Activated naive CD4-positive, alpha-beta T cell treated with anti-CD3 and anti-CD28 coated beads, Interleukin-2, amount 10 ng/mL, durations not matched to agents 7 days and 5 days (primary cell): ENCODE measurements at regions of chr6 and their contacts with region 1.

Region 1: DNA sequence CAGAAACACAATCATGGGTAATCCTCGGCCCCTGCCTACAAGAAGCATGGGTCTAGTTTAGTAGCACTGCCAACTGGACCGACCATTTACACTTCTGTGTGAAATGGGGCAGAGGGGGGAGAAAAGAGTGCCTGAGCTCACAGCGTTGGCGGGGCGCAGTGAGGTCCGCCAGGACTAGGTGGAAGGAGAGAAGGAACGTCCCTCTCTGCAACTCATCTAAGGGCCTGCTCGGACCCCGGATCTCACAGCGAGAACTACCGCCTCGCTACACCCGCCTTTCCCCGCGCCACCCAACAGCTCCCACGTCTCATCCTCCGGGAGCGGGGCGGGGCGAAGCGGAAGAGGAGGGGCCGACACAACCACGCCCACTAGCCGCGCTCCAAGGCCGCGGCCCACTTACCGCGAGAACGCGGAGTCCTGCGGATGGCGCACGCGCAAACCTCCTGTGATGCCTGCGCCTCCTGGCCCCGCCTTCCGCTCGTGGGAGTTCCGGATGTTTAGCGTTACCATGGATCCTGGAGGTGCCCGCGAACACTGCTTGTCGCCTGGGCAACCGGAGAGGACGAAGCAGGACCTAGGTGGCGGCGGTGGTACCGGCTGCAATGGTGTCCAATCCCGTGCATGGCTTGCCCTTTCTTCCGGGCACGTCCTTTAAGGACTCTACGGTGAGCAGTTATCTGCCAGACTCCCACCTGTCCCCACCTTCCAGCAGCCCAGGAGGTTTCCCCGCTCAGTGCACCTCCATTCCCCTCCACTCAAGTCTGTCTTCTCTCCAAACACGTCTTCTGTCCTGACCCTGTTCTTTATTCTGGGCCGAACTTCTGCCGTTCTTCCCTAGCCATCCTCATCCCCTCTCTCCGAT is at the start of gene EFHC1:
- DNase-seq: peak; percentile 98
- H3K4me3 Mint-ChIP-seq: no peak within 1 kb of the TSS
- H3K27ac Mint-ChIP-seq: peak within 1 kb of the TSS; percentile 86
- H3K4me1 Mint-ChIP-seq: peaks cover 22% of the 10 kb centered on the region
- H3K27me3 Mint-ChIP-seq: no peaks in the 10 kb centered on the region

Region 2: DNA sequence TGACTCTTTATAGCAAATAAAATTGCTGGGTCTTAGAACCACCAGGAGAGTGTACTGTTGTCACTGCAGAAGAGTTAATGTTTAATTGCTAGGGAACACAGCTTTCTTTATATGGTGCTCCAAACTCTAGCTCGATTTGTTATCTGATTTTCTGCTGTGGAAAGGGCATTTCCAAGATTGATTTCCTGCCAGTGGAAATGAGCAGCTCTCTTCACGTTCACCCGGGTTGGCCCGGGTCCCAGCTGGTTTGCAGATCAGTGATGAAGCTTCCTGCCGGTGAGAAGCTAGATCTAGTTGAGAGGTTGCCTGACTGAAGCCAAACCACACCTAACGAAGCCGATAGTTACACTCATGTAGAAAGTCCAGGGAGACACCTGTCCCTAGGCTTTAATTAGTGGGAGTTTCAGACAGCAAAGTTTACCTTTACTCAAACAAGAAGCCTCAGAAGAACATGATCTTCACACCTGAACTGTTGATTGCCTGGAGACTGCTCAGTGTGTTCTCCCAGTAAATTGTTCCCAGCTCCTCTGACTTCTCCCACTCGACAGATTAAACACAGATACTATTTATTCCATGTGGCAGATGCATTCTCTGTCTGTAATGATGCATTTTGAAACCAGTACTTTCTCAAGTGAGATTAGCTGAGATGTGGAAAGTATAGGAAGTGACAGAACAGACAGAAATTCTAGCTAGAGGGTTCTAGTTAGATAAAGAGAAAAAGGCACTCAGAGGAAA is 30.2 kb before region 1 on chr6:
- CTCF ChIA-PET with region 1: interaction called, 14 read pairs
- DNase-seq: peak; percentile 69
- H3K4me3 Mint-ChIP-seq: peak overlapping the region; percentile 66
- H3K27ac Mint-ChIP-seq: peak overlapping the region; percentile 98
- H3K4me1 Mint-ChIP-seq: peaks cover 80% of the 10 kb centered on the region
- H3K27me3 Mint-ChIP-seq: no peaks in the 10 kb centered on the region

Region 3: DNA sequence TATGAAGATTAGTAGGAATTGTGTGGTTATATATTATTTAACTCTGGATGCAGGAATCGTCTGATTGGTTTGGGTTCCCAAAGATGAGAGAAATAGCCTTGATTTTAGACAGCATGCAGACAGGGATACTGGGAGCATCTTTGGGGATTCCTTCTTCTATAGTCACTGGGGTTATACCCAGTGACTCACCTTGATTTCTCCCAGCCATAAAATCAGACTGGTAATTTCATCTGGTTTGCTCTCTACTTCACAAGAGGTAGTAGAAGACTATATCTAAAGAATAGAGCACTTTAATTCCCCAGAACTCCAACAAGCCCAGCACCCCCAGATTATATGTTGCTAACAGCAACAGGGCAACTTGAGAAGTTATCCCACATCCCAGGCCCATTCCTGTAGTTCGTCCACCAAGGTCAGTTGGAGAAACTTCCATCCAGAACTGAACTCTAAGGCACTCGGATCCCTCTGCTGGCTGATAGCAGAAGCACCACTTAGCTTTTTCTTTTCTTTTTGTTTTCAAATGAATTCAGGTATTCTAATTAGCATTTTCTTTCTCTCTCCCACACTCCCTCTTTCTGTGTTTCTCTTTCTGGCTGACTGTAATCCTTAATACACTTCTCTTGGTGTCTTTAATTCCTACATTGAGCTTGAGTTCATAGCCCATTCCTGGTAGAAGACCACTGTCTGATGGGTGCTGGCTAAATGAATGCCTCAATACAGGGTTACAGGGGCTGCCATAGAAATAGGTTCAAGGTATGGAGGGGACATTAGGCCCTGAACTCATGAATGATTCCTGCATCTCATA is 20.3 kb before region 1 on chr6:
- CTCF ChIA-PET with region 1: interaction called, 18 read pairs
- DNase-seq: peak; percentile 60
- H3K4me3 Mint-ChIP-seq: no peak overlapping the region
- H3K27ac Mint-ChIP-seq: peak overlapping the region; percentile 97
- H3K4me1 Mint-ChIP-seq: peaks cover 68% of the 10 kb centered on the region
- H3K27me3 Mint-ChIP-seq: no peaks in the 10 kb centered on the region

Region 4: DNA sequence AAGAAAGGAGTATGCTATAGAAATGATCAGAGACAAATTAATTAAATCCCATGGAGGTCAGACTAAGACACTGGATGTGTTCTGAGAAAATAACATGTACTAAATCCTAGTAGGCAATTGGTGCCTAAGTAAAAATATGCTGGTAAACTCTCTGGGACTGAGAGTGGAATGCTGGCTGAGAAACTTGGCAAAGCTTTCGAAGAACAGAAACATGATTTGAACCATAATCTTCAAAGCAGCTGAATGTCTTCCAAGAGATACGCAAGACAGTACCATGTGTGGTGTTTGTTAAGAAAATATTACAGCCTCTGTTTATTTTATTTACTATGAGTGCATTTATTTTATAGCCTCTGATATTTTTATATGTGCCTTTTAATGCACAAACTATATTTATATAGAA is 55.3 kb after region 1 on chr6:
- CTCF ChIA-PET with region 1: no interaction called
- DNase-seq: no peak
- H3K4me3 Mint-ChIP-seq: no peak overlapping the region
- H3K27ac Mint-ChIP-seq: no peak overlapping the region
- H3K4me1 Mint-ChIP-seq: no peaks in the 10 kb centered on the region
- H3K27me3 Mint-ChIP-seq: no peaks in the 10 kb centered on the region

Region 5: DNA sequence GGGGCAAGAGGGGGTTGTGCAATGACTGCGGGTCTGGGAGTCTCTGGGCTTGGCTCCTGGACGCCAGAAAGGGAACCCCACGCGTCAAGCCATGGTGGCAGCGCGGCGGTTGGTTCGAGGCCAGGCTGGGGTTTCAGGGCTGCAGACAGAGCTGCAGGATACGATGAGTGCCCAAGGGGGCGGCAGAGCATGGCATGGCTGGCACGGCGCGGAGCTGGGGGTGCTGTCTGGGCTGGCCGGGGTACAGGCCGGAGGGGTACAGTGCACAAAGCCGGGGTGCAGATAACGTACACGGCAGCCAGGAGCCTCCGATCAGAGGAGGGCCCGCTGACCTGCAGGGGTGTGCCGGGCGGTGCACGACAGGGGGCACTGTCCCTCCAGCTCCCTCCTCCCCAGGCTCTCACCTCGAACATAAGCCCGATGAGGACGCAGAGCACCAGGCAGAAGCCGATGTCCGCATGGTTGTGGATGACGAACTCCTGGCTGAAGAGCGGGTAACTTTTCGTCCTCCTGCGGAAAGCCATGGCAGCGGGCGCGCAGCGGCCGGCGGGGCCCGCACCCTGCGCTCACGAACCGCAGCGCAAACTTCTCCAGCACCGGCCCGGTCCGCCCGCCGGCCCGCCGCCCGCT is 156.5 kb after region 1 on chr6:
- CTCF ChIA-PET with region 1: interaction called, 15 read pairs
- DNase-seq: peak; percentile 67
- H3K4me3 Mint-ChIP-seq: peak overlapping the region; percentile 85
- H3K27ac Mint-ChIP-seq: peak overlapping the region; percentile 66
- H3K4me1 Mint-ChIP-seq: peaks cover 35% of the 10 kb centered on the region
- H3K27me3 Mint-ChIP-seq: peaks cover 29% of the 10 kb centered on the region

Region 6: GRCh38 chr6:52650941-52651340 is 230.9 kb after region 1 on chr6:
- CTCF ChIA-PET with region 1: interaction called, 37 read pairs
- DNase-seq: no peak
- H3K4me3 Mint-ChIP-seq: no peak overlapping the region
- H3K27ac Mint-ChIP-seq: no peak overlapping the region
- H3K4me1 Mint-ChIP-seq: peaks cover 5% of the 10 kb centered on the region
- H3K27me3 Mint-ChIP-seq: peaks cover 41% of the 10 kb centered on the region

Region 7: GRCh38 chr6:52663120-52663935 is 243.3 kb after region 1 on chr6:
- CTCF ChIA-PET with region 1: interaction called, 63 read pairs
- DNase-seq: peak; percentile 75
- H3K4me3 Mint-ChIP-seq: no peak overlapping the region
- H3K27ac Mint-ChIP-seq: no peak overlapping the region
- H3K4me1 Mint-ChIP-seq: peaks cover 3% of the 10 kb centered on the region
- H3K27me3 Mint-ChIP-seq: no peaks in the 10 kb centered on the region